ENCODE measurements at regions of chr10 and their contacts with region 1.

Region 1: DNA sequence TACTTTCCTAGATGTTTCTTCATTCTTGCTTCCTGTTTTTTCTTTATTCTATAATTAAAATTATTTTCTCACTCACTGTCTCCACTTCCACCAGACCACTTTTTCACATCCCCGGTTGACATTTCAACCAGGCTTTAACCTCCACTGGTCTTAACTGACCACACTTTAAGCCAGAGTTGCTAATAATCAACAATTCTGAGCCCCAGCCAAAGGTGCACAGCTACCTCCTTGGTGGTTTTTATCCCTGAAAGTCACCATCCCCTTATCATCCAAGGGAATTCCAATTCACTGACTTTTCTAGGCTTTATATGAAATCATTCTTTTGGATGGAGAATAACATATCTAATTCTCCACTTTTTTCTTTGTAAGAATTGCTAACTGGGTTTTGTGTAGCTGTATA is 138.9 kb downstream of the FRMD4A start:
- DNase-seq: no peak
- ATAC-seq: no peak
- H3K4me3 ChIP-seq: no peak overlapping the region
- H3K27ac ChIP-seq: no peak overlapping the region
- H3K4me1 ChIP-seq: no peaks in the 10 kb centered on the region
- H3K27me3 ChIP-seq: peaks cover 0 to 18% of the 10 kb centered on the region in 2 donors
- CTCF ChIP-seq: no peak

Region 2: DNA sequence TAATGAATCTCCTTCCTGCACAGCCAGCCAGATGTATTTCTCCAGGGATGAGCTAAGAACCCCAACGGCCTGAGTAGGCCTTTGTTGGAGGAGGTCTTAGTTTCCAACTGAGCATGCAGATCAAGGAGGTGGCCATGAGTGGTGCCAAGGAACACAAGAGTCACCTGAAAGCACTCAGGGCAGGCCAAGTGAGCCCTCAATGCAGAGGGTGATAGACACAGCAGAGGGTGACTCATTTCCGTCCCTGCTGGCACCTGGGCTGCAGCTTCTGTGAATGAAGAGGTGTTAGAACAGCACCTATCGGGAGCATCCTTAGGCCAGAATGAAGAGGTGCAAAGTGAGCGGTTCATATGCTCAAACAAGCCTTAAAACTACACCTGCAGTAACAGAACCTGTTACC is 72.9 kb before region 1 on chr10:
- intact Hi-C with region 1: no loop called
- DNase-seq: peak in 1 of 4 donors; percentile 53
- ATAC-seq: peak; percentile 84
- H3K4me3 ChIP-seq: no peak overlapping the region
- H3K27ac ChIP-seq: no peak overlapping the region
- H3K4me1 ChIP-seq: no peaks in the 10 kb centered on the region
- H3K27me3 ChIP-seq: no peaks in the 10 kb centered on the region
- CTCF ChIP-seq: no peak

Region 3: DNA sequence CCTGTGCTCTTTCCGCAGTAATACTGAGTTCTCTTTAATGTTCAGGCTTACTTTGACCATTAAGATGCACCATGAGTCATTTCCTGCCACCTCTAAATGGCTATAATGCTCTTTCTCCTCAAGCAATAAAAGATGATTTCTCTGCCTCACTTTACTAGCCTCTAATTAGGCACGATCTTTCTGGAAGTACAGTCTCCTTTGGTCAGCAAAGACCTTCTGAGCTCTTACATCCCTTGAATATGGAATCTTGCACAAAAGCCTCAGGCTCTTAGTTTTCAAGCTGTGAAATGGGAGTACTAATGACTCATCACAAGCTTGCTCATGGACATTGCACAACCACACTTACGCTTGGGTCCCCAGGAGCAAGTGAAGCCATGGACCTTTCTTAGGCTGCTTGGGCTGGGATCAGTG is 52.9 kb after region 1 on chr10:
- intact Hi-C with region 1: no loop called
- DNase-seq: no peak
- ATAC-seq: no peak
- H3K4me3 ChIP-seq: no peak overlapping the region
- H3K27ac ChIP-seq: no peak overlapping the region
- H3K4me1 ChIP-seq: no peaks in the 10 kb centered on the region
- H3K27me3 ChIP-seq: peaks cover 0 to 10% of the 10 kb centered on the region in 2 donors
- CTCF ChIP-seq: no peak

Region 4: DNA sequence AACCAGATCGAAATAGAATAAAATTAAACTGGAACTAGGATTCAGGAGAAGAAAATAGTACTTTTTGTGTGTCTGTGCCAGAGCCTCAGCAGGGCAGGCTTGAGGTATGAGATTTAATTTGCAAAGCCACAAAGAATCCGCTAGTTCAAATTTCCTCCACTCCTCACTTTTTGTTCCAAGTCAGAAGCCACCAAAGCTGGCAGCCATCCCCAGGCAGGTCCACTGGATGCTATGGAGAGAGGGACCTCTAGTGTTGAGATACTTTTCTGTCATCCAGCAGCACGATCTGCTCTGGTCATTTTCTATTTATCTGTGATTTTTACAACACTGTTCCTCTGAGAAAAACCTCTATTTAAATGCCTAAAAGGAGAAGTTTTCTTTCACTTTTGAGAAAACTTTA is 286.7 kb after region 1 on chr10:
- intact Hi-C with region 1: loop called in 1 of 2 experiments (anchors 10 kb)
- DNase-seq: peak in 3 of 4 donors; percentile 46 to 80 (median 60)
- ATAC-seq: peak; percentile 73
- H3K4me3 ChIP-seq: no peak overlapping the region
- H3K27ac ChIP-seq: no peak overlapping the region
- H3K4me1 ChIP-seq: no peaks in the 10 kb centered on the region
- H3K27me3 ChIP-seq: peaks cover 0 to 22% of the 10 kb centered on the region in 2 donors
- CTCF ChIP-seq: peak in 1 of 2 donors; percentile 25